Left cardiac atrium (tissue), 4 donors: ENCODE measurements at regions of chr7 and their contacts with region 1.

Region 1: GRCh38 chr7:24971333-24972165 is 8.4 kb downstream of the OSBPL3 start:
- DNase-seq: no peak
- ATAC-seq: peak in 1 of 2 donors; percentile 74

Region 2: DNA sequence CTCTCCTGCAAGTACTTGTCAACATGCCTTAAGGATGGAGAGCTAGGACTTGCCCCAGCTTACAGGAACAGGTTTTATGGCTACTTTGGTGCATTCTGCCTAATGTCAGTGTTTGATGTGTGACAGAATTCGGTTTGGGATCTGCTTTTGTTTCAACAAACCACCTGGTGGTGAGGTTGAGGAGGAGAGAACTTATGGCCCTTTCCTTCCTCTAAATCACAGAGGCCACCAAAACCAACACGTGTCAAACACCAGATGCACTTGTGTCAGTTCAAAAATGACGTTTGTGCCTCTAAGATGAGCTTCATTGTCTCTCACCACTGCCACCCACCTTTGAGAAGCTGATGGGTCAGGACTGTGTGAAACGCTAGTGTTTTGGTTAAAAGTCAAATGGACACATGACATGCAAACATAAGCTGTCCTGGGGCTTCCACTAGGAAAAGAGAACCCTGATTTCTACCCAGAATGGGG is 75.5 kb before region 1 on chr7:
- intact Hi-C with region 1: loop called in 1 of 2 experiments (anchors 5 kb)
- DNase-seq: no peak
- ATAC-seq: no peak